ENCODE measurements at regions of chr6 and their contacts with region 1.

Region 1: DNA sequence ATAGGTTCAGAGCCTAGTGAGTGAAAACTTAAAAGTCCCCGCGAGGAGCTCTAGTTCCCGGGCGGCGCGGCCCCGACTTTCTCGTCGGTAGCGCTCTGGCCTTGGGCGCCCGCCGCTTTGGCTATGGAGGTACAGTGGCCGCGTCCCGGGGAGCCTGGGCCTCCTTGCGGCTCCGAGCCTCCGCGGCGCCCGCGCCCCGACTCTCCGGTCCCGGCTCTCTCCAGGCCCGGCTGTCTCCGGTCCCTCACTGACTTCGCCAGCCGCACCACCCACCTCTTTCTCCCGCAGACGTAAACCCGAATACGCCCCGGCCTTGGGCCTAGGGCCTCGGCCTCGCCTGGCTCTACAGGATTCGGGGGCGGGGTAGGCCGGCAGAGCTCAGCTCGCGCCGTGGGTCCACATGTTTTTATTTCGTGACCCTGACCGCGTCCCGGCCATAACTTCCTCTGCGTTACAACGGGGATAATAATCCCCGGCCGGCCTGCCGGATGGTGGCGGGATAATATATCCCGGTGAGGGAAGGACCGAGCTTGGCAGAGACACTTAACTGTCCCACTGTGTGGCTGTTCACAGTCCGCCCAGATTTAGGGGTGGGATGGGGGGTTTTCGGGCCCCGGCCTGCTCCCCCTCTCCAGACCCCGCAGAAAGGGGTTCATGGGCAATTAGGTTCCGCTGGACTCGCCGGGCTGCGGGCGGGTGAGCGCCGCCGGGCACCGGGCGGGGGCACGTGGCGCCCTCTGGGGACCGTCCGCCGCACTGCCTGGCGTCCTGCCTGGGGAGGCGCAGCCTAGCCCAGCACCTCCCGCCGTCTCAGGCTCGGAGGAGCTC is 10.0 kb upstream of the TBX18 start:
- ATAC-seq: peak; percentile 71 to 85 (median 74)
- H3K4me3 ChIP-seq: peak overlapping the region; percentile 28 to 37 (median 31)
- H3K27ac ChIP-seq: no peak overlapping the region
- H3K4me1 ChIP-seq: peaks cover 0 to 3% of the 10 kb centered on the region in 2 donors

Region 2: GRCh38 chr6:84392261-84392660 is 382.1 kb before region 1 on chr6:
- in situ Hi-C with region 1: no loop called
- ATAC-seq: no peak
- H3K4me3 ChIP-seq: no peak overlapping the region
- H3K27ac ChIP-seq: no peak overlapping the region
- H3K4me1 ChIP-seq: no peaks in the 10 kb centered on the region

Region 3: GRCh38 chr6:84536914-84537638 is 237.3 kb before region 1 on chr6:
- in situ Hi-C with region 1: no loop called
- ATAC-seq: no peak
- H3K4me3 ChIP-seq: no peak overlapping the region
- H3K27ac ChIP-seq: no peak overlapping the region
- H3K4me1 ChIP-seq: no peaks in the 10 kb centered on the region

Region 4: GRCh38 chr6:85113923-85114580 is 339.7 kb after region 1 on chr6:
- in situ Hi-C with region 1: loop called in 1 of 9 experiments (anchors 25 kb)
- ATAC-seq: peak in 5 of 8 experiments; percentile 33 to 82 (median 60)
- H3K4me3 ChIP-seq: no peak overlapping the region
- H3K27ac ChIP-seq: no peak overlapping the region
- H3K4me1 ChIP-seq: peaks cover 6 to 17% of the 10 kb centered on the region in 2 donors

Region 5: DNA sequence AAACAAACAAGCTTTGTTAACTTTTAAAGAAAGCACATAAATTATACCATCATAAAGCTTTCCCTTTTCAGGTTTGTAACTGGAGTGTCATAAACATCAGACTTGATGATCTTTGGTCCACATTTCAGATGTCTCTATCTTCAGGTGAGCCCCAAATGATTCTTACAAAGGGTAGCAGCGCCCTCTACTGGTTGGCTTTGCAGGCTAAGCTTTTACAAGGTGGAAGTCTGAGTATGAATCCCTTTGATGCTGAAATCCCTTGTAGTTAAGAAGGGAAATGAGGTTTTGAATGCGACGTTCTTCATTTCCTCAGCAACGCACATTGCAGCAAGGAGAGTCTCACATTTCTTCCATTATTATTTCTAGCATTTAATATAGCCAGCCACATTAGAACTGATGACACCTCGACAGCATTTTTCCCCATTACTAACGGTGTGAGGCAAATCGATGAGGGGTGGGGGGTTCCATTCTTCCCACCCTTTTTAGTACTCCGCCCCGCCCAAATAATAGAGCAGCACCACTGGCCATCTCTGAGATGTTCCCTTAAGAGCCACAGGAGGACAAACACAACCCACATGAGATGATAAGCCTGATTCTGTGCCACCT is 549.2 kb after region 1 on chr6:
- in situ Hi-C with region 1: loop called in 1 of 9 experiments (anchors 25 kb)
- ATAC-seq: peak; percentile 47 to 92 (median 78)
- H3K4me3 ChIP-seq: no peak overlapping the region
- H3K27ac ChIP-seq: no peak overlapping the region
- H3K4me1 ChIP-seq: no peaks in the 10 kb centered on the region

Measured in motor neuron (in vitro differentiated cells).